Psoas muscle (tissue), 8 donors: ENCODE measurements at regions of chr6 and their contacts with region 1.

Region 1: GRCh38 chr6:6927521-6928371 is 180.0 kb upstream of the RREB1 start:
- DNase-seq: peak; percentile 65 to 86
- ATAC-seq: peak; percentile 74 to 82 (median 80)
- H3K4me3 ChIP-seq: peak overlapping the region; percentile 60
- H3K27ac ChIP-seq: peak overlapping the region; percentile 93
- H3K4me1 ChIP-seq: peaks cover 31% of the 10 kb centered on the region
- H3K27me3 ChIP-seq: no peaks in the 10 kb centered on the region
- CTCF ChIP-seq: peak; percentile 31

Region 2: DNA sequence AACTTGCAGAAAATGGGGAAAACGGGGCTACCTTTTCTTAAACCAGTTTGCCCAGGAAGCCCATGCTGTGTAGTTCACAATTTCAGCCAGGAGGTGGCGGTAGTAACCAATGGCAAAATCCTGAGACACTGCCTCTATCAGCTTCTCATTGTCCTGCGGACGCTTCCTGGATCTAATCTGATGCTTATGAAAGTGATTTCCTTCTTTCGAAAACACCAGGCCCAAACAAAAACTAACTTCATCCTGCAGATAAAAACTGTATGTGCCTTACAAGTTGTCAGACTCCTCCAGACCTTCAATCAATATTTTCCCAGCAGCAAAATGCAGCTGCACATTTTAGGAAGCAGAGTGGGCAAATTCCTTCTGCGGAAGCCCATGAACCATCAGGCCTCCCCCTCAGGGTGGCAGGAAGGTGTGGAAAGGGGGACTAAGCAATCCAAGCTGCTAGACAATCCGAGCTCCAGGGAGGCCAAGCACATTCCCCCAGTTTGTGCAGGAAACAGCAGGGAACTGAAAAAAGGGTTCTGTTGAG is 250.8 kb before region 1 on chr6:
- intact Hi-C with region 1: no loop called
- DNase-seq: peak; percentile 72 to 79
- ATAC-seq: peak; percentile 83 to 95 (median 91)
- H3K4me3 ChIP-seq: no peak overlapping the region
- H3K27ac ChIP-seq: no peak overlapping the region
- H3K4me1 ChIP-seq: no peaks in the 10 kb centered on the region
- H3K27me3 ChIP-seq: no peaks in the 10 kb centered on the region
- CTCF ChIP-seq: peak; percentile 98

Region 3: GRCh38 chr6:6826095-6826901 is 101.4 kb before region 1 on chr6:
- intact Hi-C with region 1: loop called in 1 of 2 experiments (anchors 5 kb)
- DNase-seq: peak; percentile 66 to 89
- ATAC-seq: peak; percentile 88 to 92 (median 88)
- H3K4me3 ChIP-seq: peak overlapping the region; percentile 40
- H3K27ac ChIP-seq: peak overlapping the region; percentile 98
- H3K4me1 ChIP-seq: peaks cover 27% of the 10 kb centered on the region
- H3K27me3 ChIP-seq: no peaks in the 10 kb centered on the region
- CTCF ChIP-seq: no peak

Region 4: GRCh38 chr6:6942831-6943230 is 15.1 kb after region 1 on chr6:
- intact Hi-C with region 1: loop called in 1 of 2 experiments (anchors 2 kb)
- DNase-seq: peak; percentile 81 to 93
- ATAC-seq: peak; percentile 100
- H3K4me3 ChIP-seq: peak overlapping the region; percentile 20
- H3K27ac ChIP-seq: peak overlapping the region; percentile 91
- H3K4me1 ChIP-seq: peaks cover 17% of the 10 kb centered on the region
- H3K27me3 ChIP-seq: no peaks in the 10 kb centered on the region
- CTCF ChIP-seq: no peak

Region 5: DNA sequence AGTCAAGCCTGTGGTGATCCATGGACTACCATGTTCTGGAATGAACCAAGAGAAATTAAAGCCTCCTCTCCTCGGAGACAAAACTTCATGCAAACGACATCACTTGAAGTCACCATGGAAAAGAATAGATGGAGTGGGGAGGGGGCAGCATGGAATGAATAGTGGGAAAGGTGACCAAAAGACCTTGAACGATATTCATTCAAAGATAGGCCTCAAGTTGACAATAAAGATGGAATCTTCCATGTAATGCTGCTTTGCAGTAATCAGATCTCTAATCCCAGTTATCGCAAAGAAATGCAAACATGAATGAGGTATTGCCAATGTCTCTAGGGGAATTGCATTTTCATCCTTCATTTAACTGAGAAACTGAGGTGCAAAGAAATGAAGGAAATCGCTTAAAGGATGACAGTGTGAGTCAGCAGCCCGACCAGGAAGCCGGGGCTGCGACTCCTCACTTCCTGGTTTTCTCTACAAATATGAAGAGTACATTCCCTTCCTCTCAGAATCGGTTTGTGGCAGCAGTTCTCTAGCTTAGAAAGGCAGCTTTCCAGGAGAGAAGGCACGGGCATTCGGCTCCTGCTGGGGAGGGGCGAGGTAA is 114.4 kb after region 1 on chr6:
- intact Hi-C with region 1: loop called in 1 of 2 experiments (anchors 10 kb)
- DNase-seq: no peak
- ATAC-seq: no peak
- H3K4me3 ChIP-seq: no peak overlapping the region
- H3K27ac ChIP-seq: peak overlapping the region; percentile 84
- H3K4me1 ChIP-seq: peaks cover 22% of the 10 kb centered on the region
- H3K27me3 ChIP-seq: no peaks in the 10 kb centered on the region
- CTCF ChIP-seq: no peak

Region 6: DNA sequence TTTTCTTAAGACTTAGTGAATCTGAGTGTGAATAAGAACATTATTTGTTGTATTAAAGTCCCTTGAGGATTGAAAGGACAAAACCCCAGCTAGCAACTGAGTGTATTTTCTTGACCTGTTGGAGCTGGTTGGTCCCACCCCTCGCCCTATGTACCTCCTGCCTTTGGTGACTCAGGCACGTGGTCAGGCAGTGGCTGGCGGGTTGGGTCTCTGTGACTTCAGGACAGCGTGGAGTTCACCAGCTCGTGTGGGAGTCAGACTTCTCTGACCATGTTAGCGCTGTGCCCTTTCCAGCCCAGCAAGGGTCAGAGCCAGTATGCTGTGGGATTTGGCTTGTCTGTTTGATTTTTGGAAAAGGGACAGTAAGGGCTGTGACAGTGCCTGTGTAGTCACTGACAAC is 291.6 kb after region 1 on chr6:
- intact Hi-C with region 1: loop called in 1 of 2 experiments (anchors 10 kb)
- DNase-seq: peak in 1 of 2 donors; percentile 72
- ATAC-seq: peak in 3 of 4 donors; percentile 21 to 45 (median 23)
- H3K4me3 ChIP-seq: no peak overlapping the region
- H3K27ac ChIP-seq: peak overlapping the region; percentile 95
- H3K4me1 ChIP-seq: peaks cover 56% of the 10 kb centered on the region
- H3K27me3 ChIP-seq: no peaks in the 10 kb centered on the region
- CTCF ChIP-seq: no peak